Colonic mucosa (tissue), 4 donors: ENCODE measurements at regions of chr1 and their contacts with region 1.

Region 1: GRCh38 chr1:157073944-157074767 is 25.5 kb downstream of the ETV3L start:
- DNase-seq: peak; percentile 75
- H3K4me3 ChIP-seq: no peak overlapping the region
- H3K27ac ChIP-seq: no peak overlapping the region
- H3K4me1 ChIP-seq: no peaks in the 10 kb centered on the region
- H3K27me3 ChIP-seq: no peaks in the 10 kb centered on the region
- CTCF ChIP-seq: peak; percentile 61

Region 2: DNA sequence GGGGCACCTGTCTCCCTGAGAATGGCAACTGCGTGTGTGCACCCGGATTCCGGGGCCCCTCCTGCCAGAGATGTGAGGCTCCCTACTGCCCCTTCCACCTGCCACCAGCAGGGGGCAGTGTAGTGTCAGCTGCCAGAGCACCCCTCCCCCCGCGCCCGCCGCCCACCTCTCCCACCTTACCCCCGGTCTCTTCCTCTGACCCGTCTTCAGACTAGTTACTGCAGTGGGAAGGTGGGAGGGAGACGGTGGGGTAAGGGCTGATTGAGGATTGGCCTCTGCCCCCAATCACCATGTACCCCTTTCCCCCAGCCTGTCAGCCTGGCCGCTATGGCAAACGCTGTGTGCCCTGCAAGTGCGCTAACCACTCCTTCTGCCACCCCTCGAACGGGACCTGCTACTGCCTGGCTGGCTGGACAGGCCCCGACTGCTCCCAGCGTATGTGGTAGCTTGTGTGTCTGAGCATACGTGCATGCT is 163.8 kb before region 1 on chr1:
- intact Hi-C with region 1: loop called (anchors 5 kb)
- DNase-seq: peak; percentile 47
- H3K4me3 ChIP-seq: no peak overlapping the region
- H3K27ac ChIP-seq: no peak overlapping the region
- H3K4me1 ChIP-seq: peaks cover 3% of the 10 kb centered on the region
- H3K27me3 ChIP-seq: no peaks in the 10 kb centered on the region
- CTCF ChIP-seq: peak; percentile 85

Region 3: GRCh38 chr1:157040802-157041201 is 33.4 kb before region 1 on chr1:
- intact Hi-C with region 1: no loop called
- DNase-seq: peak; percentile 32
- H3K4me3 ChIP-seq: no peak overlapping the region
- H3K27ac ChIP-seq: no peak overlapping the region
- H3K4me1 ChIP-seq: peaks cover 7% of the 10 kb centered on the region
- H3K27me3 ChIP-seq: no peaks in the 10 kb centered on the region
- CTCF ChIP-seq: no peak